ENCODE measurements at regions of chr16 and their contacts with region 1.

Region 1: DNA sequence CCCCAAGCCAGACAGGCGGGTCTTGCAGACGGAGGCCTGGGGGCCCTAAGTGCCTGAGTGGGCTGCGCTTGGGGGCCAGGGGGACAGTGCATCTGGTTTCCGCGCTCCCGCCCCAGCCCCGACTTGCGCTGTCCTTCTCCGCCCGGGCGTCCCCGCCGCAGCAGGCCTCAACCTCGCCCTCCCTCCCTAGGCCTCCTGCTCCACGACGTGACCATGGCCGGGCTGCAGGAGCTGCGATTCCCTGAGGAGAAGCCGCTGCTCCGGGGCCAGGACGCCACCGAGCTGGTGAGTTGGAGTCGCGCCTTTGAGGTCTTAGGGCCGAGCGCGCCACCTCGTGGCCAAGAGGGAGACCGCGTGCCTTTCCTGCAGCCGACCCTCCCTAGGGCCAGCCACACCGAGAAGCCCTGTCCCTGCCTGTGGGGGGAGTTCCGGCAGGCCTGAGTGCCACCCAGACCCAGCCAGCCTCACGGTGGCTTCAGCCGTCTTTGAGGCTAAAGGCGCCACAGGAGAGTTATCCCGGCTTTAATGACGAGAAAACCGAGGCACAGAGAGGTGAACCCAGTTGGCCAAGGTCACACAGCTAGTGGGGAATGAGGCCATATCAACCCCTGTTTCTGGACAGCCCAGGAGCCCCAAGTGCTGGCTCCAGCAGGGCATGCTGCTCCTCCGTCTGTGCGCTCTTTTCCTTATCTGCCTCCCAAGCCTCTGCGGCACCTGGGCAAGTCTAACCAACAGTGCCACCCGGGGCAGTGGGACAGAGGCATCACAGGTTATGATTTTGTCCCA is 12.2 kb upstream of the NDRG4 start:
- DNase-seq: peak; percentile 90
- H3K4me3 ChIP-seq: no peak overlapping the region
- H3K27ac ChIP-seq: no peak overlapping the region
- H3K4me1 ChIP-seq: no peaks in the 10 kb centered on the region
- H3K27me3 ChIP-seq: no peaks in the 10 kb centered on the region
- CTCF ChIP-seq: peak; percentile 96

Region 2: GRCh38 chr16:58020628-58021139 is 467.1 kb before region 1 on chr16:
- CTCF ChIA-PET with region 1: interaction called, 3 read pairs
- POLR2A ChIA-PET with region 1: no interaction called
- intact Hi-C with region 1: loop called (anchors 5 kb)
- DNase-seq: peak; percentile 55
- H3K4me3 ChIP-seq: no peak overlapping the region
- H3K27ac ChIP-seq: no peak overlapping the region
- H3K4me1 ChIP-seq: peaks cover 23% of the 10 kb centered on the region
- H3K27me3 ChIP-seq: no peaks in the 10 kb centered on the region
- CTCF ChIP-seq: peak; percentile 96

Region 3: GRCh38 chr16:58129097-58129936 is 358.4 kb before region 1 on chr16 and contains the start of gene CFAP20:
- CTCF ChIA-PET with region 1: no interaction called
- POLR2A ChIA-PET with region 1: no interaction called
- intact Hi-C with region 1: loop called (anchors 10 kb)
- DNase-seq: peak; percentile 100
- H3K4me3 ChIP-seq: peak within 1 kb of the TSS; percentile 95
- H3K27ac ChIP-seq: peak within 1 kb of the TSS; percentile 92
- H3K4me1 ChIP-seq: peaks cover 27% of the 10 kb centered on the region
- H3K27me3 ChIP-seq: no peaks in the 10 kb centered on the region
- CTCF ChIP-seq: no peak
- total RNA-seq, gene CFAP20: 66.3 and 81.6 TPM in 2 replicates

Region 4: GRCh38 chr16:58336332-58337089 is 151.2 kb before region 1 on chr16:
- CTCF ChIA-PET with region 1: interaction called, 29 read pairs
- POLR2A ChIA-PET with region 1: no interaction called
- intact Hi-C with region 1: loop called (anchors 1 kb)
- DNase-seq: peak; percentile 83
- H3K4me3 ChIP-seq: peak overlapping the region; percentile 28
- H3K27ac ChIP-seq: no peak overlapping the region
- H3K4me1 ChIP-seq: peaks cover 5% of the 10 kb centered on the region
- H3K27me3 ChIP-seq: no peaks in the 10 kb centered on the region
- CTCF ChIP-seq: peak; percentile 96